ENCODE measurements at regions of chr1 and their contacts with region 1.

Region 1: GRCh38 chr1:24769656-24770651 is 24.7 kb downstream of the CLIC4 start:
- DNase-seq: no peak
- ATAC-seq: peak; percentile 86
- H3K4me3 ChIP-seq: no peak overlapping the region
- H3K27ac ChIP-seq: peak overlapping the region; percentile 98 to 99
- H3K4me1 ChIP-seq: peaks cover 2 to 5% of the 10 kb centered on the region in 2 donors
- H3K27me3 ChIP-seq: no peaks in the 10 kb centered on the region

Region 2: DNA sequence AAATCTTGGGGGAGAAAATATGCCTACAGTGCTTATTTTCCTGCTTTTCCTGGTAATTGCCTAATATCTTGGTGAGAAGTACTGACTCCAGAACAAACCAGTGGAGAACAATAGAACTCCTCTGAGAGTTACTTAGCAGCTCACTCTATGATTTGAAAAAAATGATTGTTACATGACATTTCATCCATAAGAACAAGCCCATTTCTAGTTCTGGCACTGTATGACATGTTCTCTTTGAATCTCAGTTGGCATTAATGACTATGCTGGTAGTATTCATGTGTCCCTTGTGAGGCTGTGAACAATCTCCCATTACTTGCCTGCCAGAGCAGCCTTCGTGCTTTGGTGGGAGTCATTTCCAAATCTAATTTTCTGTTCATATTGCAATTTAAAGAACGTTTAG is 33.3 kb after region 1 on chr1:
- intact Hi-C with region 1: loop called in 1 of 2 experiments (anchors 5 kb)
- DNase-seq: no peak
- ATAC-seq: no peak
- H3K4me3 ChIP-seq: no peak overlapping the region
- H3K27ac ChIP-seq: no peak overlapping the region
- H3K4me1 ChIP-seq: peaks cover 4 to 5% of the 10 kb centered on the region in 2 donors
- H3K27me3 ChIP-seq: no peaks in the 10 kb centered on the region

Measured in aorta (tissue), 5 donors.